ENCODE measurements at regions of chr9 and their contacts with region 1.

Region 1: GRCh38 chr9:36328798-36329411 is 70.7 kb upstream of the GNE start:
- DNase-seq: peak; percentile 31
- H3K4me3 ChIP-seq: no peak overlapping the region
- CTCF ChIP-seq: peak; percentile 49

Region 2: GRCh38 chr9:35954942-35955546 is 373.9 kb before region 1 on chr9:
- CTCF ChIA-PET with region 1: interaction called, 17 read pairs
- POLR2A ChIA-PET with region 1: no interaction called
- DNase-seq: peak; percentile 57
- H3K4me3 ChIP-seq: no peak overlapping the region
- CTCF ChIP-seq: peak; percentile 81

Region 3: DNA sequence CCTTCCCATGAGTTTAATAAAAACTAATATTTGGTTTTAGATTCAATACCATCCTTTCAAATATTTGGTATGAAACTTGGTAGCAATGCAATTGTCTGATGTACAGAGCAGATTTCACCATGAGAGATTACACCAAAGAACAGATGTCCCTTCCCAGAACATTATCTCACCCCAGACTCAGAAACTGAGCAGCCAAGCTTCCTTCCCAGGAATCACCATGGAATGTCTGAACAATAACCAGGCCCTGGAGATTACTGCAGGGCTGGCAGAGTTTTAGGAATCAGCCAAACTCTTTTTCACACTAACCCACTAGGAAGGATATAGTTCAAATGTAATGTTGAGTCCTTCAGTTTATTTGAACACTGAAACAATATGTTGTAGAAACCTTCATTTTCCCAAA is 114.3 kb before region 1 on chr9:
- CTCF ChIA-PET with region 1: interaction called, 11 read pairs
- POLR2A ChIA-PET with region 1: no interaction called
- DNase-seq: no peak
- H3K4me3 ChIP-seq: no peak overlapping the region
- CTCF ChIP-seq: no peak

Region 4: GRCh38 chr9:36258208-36258988 is 70.5 kb before region 1 on chr9 and contains the start of gene GNE:
- CTCF ChIA-PET with region 1: interaction called, 276 read pairs
- POLR2A ChIA-PET with region 1: interaction called, 4 read pairs
- DNase-seq: peak; percentile 69
- H3K4me3 ChIP-seq: peak within 1 kb of the TSS; percentile 93
- CTCF ChIP-seq: no peak

Region 5: DNA sequence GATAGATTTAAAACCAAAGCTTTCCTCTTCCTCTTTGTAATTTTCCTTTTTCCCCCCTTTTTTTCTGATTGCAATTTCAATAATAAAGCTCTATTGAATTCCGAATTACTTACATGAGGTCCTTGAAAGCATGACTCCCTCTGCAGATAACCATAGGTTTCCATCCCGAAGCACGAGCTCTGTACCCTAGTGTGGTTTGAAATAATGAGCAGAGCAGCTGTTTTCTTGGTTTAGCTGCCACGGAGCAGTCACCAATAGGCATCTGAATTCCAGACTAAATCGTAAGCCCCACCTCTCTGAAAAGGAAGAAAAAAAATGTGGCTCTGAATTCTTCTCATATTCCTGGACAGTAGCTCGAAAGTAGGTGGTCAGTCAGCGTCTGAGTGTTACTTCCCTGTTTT is 52.1 kb before region 1 on chr9:
- CTCF ChIA-PET with region 1: interaction called, 10 read pairs
- POLR2A ChIA-PET with region 1: no interaction called
- DNase-seq: peak; percentile 42
- H3K4me3 ChIP-seq: peak overlapping the region; percentile 40
- CTCF ChIP-seq: no peak

Region 6: DNA sequence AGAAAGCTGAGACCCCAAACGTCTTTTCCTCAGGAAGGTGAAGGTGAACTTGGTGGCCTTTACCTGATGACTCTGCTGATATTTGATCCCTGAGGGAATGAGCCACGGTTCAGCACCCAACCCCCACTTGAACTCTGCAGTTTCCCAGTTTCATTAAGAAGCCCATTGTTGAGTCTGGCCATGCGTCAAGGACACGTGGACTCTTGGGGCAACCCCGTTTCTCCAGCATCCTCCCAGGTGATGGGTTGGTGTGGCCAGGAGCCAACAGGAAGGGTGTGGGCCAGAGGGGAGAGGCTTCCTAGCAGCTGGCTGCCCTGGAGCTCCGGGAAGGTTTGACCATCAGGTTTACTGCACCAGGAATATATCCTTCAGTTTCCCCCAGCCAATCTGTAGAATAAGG is 11.1 kb before region 1 on chr9:
- CTCF ChIA-PET with region 1: interaction called, 82 read pairs
- POLR2A ChIA-PET with region 1: no interaction called
- DNase-seq: no peak
- H3K4me3 ChIP-seq: no peak overlapping the region
- CTCF ChIP-seq: no peak

Region 7: GRCh38 chr9:36625006-36625615 is 296.2 kb after region 1 on chr9:
- CTCF ChIA-PET with region 1: no interaction called
- POLR2A ChIA-PET with region 1: no interaction called
- DNase-seq: peak; percentile 10
- H3K4me3 ChIP-seq: no peak overlapping the region
- CTCF ChIP-seq: no peak